Activated T-helper 1 cell treated with anti-CD3 and anti-CD28 coated beads, Interleukin-12 subunit alpha, Interleukin-12 subunit beta, Interleukin-2, Interleukin-4 antibody, amounts not matched to agents 30 ng/mL and 10 ng/mL and 1 ng/mL, durations not matched to agents 14 hours and 24 hours and 36 hours (primary cell): ENCODE measurements at regions of chr16 and their contacts with region 1.

Region 1: DNA sequence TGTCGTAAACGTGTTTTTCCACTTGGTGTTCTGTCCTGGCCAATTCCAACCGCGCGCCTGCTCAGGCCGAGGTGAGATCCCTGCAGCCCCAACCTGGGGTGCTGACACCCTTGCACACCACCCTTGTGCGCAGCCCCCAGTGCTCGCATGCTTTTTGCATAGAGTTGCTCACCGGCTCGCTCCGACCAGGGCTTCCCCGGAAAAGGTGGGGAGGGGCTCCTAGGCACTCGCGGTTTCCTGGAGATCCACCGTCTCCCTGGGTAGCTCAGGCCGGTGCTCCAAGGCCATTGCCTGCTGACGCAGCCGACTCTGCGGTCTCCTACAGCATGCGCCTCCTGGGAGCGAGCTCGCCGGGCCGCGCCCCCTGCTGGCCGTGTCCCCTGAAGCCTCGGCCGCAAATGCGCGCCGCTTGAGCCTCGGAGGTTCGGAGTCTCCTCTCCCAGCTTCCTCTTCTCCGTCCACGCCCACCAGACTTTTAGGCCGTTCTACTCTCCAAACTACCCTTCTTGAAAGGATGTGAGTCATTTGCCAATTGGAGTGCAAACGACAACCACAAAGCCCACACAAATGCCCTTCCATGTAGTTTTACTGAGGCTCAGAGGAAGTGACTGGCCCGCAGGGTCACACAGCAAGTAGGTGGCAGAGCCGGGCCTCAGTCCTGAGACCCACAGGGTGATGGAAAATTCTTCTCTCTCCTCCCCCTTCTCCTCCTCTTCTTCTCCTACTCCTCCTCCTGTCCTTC is 7.2 kb upstream of the PDP2 start:
- DNase-seq: peak; percentile 90
- H3K4me3 Mint-ChIP-seq: peak overlapping the region; percentile 80
- H3K27ac Mint-ChIP-seq: peak overlapping the region; percentile 92
- H3K4me1 Mint-ChIP-seq: peaks cover 60% of the 10 kb centered on the region
- H3K27me3 Mint-ChIP-seq: no peaks in the 10 kb centered on the region

Region 2: GRCh38 chr16:66552286-66553177 is 320.6 kb before region 1 on chr16 and contains the start of gene CKLF:
- intact Hi-C with region 1: loop called (anchors 5 kb)
- DNase-seq: peak; percentile 93
- H3K4me3 Mint-ChIP-seq: peak within 1 kb of the TSS; percentile 99
- H3K27ac Mint-ChIP-seq: peak within 1 kb of the TSS; percentile 95
- H3K4me1 Mint-ChIP-seq: peaks cover 81% of the 10 kb centered on the region
- H3K27me3 Mint-ChIP-seq: peaks cover 2% of the 10 kb centered on the region
- total RNA-seq, gene CKLF: 153 and 159 TPM in 2 replicates

Region 3: GRCh38 chr16:66629856-66630255 is 243.3 kb before region 1 on chr16:
- intact Hi-C with region 1: no loop called
- DNase-seq: no peak
- H3K4me3 Mint-ChIP-seq: no peak overlapping the region
- H3K27ac Mint-ChIP-seq: no peak overlapping the region
- H3K4me1 Mint-ChIP-seq: no peaks in the 10 kb centered on the region
- H3K27me3 Mint-ChIP-seq: no peaks in the 10 kb centered on the region

Region 4: DNA sequence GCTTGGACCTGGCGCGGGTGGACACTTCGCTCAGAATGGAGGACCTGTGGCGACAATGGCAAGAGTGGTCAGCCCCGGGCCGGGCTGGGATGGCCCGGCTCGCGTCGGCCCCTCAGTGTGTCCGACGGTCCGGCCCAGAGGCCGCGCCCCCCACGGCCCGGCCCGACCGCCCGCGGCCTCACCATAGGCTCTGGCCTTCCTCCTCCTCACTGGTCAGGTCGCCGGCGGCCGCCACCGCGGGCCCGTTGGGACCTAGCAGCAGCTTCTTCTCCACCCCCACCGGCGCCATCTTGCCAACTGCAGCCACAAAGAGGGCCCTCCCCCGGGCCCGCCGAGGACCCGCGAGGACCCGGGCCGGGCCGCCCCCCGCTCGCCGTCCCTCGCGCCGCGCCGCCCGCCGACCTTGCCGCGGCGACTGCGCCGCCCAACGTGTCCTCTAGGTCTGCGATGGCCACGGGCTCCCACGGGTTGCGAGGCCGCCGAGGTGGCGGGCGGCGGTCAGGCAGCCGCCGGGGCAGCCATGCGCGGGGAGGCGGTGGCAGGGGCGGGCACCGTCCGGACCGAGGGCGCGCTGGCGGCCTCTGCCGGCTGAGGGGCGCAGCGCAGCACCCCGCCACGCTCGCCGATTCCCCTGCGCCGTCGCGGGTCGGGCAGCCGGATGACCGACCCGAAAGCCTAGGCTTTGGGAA is 121.7 kb before region 1 on chr16 and contains the start of gene DYNC1LI2:
- intact Hi-C with region 1: loop called (anchors 5 kb)
- DNase-seq: peak; percentile 76
- H3K4me3 Mint-ChIP-seq: peak within 1 kb of the TSS; percentile 93
- H3K27ac Mint-ChIP-seq: peak within 1 kb of the TSS; percentile 80
- H3K4me1 Mint-ChIP-seq: peaks cover 46% of the 10 kb centered on the region
- H3K27me3 Mint-ChIP-seq: peaks cover 16% of the 10 kb centered on the region
- total RNA-seq, gene DYNC1LI2: 55.7 and 60.3 TPM in 2 replicates

Region 5: GRCh38 chr16:66934153-66934838 is 61.2 kb after region 1 on chr16 and contains the start of gene CIAO2B:
- intact Hi-C with region 1: loop called (anchors 2 kb)
- DNase-seq: peak; percentile 88
- H3K4me3 Mint-ChIP-seq: peak within 1 kb of the TSS; percentile 96
- H3K27ac Mint-ChIP-seq: peak within 1 kb of the TSS; percentile 87
- H3K4me1 Mint-ChIP-seq: peaks cover 53% of the 10 kb centered on the region
- H3K27me3 Mint-ChIP-seq: no peaks in the 10 kb centered on the region
- total RNA-seq, gene CIAO2B: 162 and 164 TPM in 2 replicates